ENCODE measurements at regions of chr2 and their contacts with region 1.

Region 1: DNA sequence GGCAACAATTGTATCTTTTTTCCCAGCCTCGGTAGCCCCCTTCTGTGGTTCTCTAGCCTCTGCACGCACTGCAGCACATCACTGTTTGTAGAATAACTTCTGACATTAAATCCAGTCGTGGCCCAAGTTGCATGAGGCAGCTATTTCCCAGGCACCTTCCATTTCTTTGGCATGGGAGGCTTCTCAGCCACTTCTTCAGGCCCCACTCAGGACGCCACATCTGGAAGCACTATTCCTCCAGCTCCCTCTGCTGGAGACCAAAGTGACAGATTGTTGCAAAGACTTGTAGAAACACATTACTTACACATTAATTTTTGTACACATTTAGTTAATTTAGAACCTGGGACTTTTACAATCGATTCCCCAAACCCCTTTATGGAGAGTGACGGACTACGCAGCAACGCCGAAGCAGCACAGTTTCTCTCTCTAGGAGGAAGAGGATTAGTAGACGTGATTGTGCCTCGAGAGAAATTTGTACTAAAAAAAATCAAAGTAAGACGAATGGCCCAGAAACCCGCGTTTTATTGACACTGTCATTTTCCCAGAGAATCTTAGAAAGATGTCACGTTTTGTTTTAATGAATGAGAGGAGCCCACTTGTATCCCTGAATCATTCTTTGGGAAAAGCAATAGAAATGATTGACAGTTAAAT is 57.8 kb upstream of the RGPD5 start:
- DNase-seq: peak; percentile 23
- H3K4me3 ChIP-seq: no peak overlapping the region
- H3K27me3 ChIP-seq: no peaks in the 10 kb centered on the region
- CTCF ChIP-seq: peak; percentile 75

Region 2: DNA sequence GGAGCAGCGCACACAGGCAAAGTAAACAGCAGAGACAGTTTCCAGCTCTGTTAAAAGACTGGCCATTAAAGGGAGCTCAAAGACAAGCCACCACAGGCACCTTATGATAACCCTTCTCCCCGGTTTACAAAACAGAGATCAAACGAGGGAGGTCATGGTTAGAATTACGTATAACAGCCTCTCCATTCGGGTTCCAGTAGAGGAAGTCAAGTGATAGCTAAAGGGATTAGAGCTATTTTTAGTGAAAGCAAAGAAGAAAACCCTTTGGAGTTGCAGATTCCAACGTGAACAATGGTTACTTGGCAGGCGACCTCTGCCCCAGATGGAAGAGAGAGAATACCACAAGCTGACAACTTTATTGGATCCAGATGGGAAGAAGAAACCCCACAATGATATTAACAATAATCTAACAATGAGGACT is 716.1 kb before region 1 on chr2:
- CTCF ChIA-PET with region 1: no interaction called
- POLR2A ChIA-PET with region 1: no interaction called
- DNase-seq: peak; percentile 19
- H3K4me3 ChIP-seq: no peak overlapping the region
- H3K27me3 ChIP-seq: peaks cover 22% of the 10 kb centered on the region
- CTCF ChIP-seq: no peak

Region 3: DNA sequence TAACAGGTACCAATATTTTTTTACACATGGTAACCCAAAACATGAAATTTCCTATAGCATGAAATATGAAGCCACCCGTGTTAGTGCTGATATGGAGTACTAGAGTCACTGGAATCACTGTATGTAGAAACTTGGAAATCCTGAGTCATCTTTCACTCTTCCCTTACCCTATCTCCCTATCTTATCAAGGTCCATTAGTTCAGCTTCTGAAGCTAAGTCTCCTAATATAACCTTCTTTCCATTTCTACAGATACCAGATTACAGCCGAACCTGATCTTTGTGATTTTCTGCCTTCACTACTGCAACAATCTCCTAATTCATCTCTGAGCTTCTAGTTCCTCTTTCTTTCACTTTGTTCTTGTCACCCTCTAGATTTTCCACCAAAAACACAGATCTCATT is 181.5 kb before region 1 on chr2:
- CTCF ChIA-PET with region 1: interaction called, 92 read pairs
- POLR2A ChIA-PET with region 1: no interaction called
- DNase-seq: no peak
- H3K4me3 ChIP-seq: no peak overlapping the region
- H3K27me3 ChIP-seq: no peaks in the 10 kb centered on the region
- CTCF ChIP-seq: no peak

Region 4: DNA sequence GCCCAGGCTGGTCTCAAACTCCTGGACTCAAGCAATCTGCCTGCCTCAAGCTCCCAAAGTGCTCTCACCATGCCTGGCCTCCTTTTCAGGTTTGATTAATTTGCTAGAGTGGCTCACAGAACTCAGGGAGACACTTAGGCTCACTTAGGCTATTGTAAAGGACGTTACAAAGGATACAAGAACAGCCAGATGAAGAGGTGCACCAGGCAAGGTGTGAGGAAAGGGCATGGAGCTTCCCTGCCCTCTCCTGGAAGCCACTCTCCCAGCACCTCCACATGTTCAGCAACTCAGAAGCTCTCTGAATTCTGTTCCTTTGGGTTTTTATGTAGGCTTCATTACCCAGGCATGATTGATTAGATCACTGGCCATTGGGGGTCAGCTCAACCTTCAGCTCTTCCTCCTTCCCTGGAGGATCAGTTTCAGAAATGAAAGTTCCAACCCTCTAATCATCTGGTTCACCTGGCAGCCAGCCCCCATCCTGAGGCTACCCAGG is 20.9 kb before region 1 on chr2:
- CTCF ChIA-PET with region 1: interaction called, 13 read pairs
- POLR2A ChIA-PET with region 1: no interaction called
- DNase-seq: no peak
- H3K4me3 ChIP-seq: no peak overlapping the region
- H3K27me3 ChIP-seq: no peaks in the 10 kb centered on the region
- CTCF ChIP-seq: peak; percentile 41